ENCODE measurements at regions of chr14 and their contacts with region 1.

Region 1: DNA sequence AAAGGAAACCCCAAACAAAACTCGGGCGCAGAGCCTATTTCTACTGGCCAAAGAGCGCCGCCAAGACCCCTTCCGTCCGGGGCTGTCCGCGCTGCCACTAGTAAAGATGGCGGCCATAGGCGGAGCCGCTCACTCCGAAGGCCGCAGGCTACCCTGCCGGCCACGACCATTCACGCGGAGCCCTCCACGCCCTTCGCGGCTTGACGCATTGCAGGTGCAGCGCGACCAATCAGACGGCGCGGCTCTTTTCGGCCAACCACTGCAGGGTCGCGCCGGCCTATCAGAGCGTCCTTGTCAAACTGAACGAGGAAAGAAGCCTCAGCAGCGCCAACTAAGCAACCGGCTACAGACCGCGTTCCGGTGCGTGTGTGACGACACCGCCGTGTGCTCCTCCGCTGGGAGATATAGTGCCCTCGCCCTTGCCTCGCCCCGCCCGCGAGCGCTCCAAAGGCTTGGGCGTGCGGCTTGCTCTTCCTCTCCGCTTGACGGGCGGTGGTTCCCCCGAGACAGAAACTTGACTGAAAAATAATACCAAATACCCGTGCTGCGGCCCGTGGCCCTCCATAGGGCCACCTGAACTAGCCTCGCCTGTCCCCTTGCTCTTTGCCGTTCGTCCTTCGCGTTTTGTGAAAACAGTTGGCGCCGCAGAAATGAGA is 13.6 kb upstream of the CALM1 start:
- DNase-seq: peak; percentile 98 to 100 (median 99)

Region 2: GRCh38 chr14:89947344-89947743 is 435.9 kb before region 1 on chr14:
- intact Hi-C with region 1: no loop called
- DNase-seq: no peak

Region 3: GRCh38 chr14:90331497-90332435 is 51.4 kb before region 1 on chr14 and contains the start of gene NRDE2:
- intact Hi-C with region 1: loop called (anchors 1 kb)
- DNase-seq: peak; percentile 96 to 99 (median 98)

Measured in posterior cingulate gyrus (tissue), 11 donors.